ENCODE measurements at regions of chr14 and their contacts with region 1.

Region 1: DNA sequence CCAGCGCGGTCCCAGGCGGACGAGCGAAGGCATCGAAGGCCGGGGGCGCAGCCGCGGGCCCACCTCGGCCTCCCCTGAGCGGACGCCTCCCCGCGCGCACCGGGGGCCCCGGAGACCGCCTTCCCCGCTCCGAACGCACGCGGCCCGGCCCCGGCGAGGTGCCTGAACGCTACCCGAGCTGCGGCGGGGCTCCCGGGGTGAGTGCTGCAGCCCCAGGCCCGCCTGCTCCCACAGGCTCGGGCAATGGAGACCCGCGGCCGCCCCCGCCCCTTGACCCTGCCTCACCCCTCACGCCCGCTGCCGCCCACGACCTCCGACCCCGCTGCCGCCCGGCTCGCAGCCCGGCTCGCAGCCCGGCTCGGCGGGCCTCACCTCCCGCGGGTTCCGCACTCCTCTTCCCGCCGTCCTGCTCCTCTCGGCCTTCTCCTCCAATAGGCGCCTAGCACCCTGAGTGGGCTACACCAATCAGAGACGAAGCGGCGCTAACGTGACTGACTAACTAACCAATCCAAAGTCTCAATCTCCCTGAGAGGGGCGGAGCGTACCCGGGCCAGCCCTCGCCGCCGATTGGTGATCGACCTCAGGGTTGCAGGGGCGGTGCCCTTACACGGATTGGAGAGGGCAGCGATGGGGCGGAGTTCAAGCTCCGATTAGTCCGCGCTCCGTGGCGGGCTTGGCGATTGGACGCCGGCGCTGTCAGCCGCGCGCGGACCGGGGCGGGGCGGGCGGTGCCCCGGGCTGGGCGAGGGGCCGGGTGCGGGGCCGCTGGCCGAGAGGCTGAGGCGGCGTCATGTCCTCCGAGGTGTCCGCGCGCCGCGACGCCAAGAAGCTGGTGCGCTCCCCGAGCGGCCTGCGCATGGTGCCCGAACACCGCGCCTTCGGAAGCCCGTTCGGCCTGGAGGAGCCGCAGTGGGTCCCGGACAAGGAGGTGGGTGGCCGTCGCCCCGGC is at the starts of genes XRCC3 and ZFYVE21:
- DNase-seq: peak; percentile 100
- H3K4me3 ChIP-seq: peak within 1 kb of the TSS; percentile 79
- H3K27ac ChIP-seq: peak within 1 kb of the TSS; percentile 36
- H3K4me1 ChIP-seq: peaks cover 24% of the 10 kb centered on the region
- H3K27me3 ChIP-seq: no peaks in the 10 kb centered on the region
- CTCF ChIP-seq: no peak
- total RNA-seq, gene XRCC3: 64.1 and 65.1 TPM in 2 replicates
- total RNA-seq, gene ZFYVE21: 93.3 and 118 TPM in 2 replicates

Region 2: GRCh38 chr14:101917413-101918017 is 1797.8 kb before region 1 on chr14:
- CTCF ChIA-PET with region 1: no interaction called
- POLR2A ChIA-PET with region 1: interaction called, 33 read pairs
- intact Hi-C with region 1: no loop called
- DNase-seq: no peak
- H3K4me3 ChIP-seq: no peak overlapping the region
- H3K27ac ChIP-seq: no peak overlapping the region
- H3K4me1 ChIP-seq: no peaks in the 10 kb centered on the region
- H3K27me3 ChIP-seq: no peaks in the 10 kb centered on the region
- CTCF ChIP-seq: no peak

Region 3: GRCh38 chr14:103628684-103629502 is 86.4 kb before region 1 on chr14 and contains the start of gene KLC1:
- CTCF ChIA-PET with region 1: no interaction called
- POLR2A ChIA-PET with region 1: no interaction called
- intact Hi-C with region 1: loop called (anchors 2 kb)
- DNase-seq: peak; percentile 57 to 90
- H3K4me3 ChIP-seq: peak within 1 kb of the TSS; percentile 81
- H3K27ac ChIP-seq: peak within 1 kb of the TSS; percentile 92
- H3K4me1 ChIP-seq: peaks cover 50% of the 10 kb centered on the region
- H3K27me3 ChIP-seq: no peaks in the 10 kb centered on the region
- CTCF ChIP-seq: no peak
- total RNA-seq, gene KLC1: 254 and 331 TPM in 2 replicates

Region 4: DNA sequence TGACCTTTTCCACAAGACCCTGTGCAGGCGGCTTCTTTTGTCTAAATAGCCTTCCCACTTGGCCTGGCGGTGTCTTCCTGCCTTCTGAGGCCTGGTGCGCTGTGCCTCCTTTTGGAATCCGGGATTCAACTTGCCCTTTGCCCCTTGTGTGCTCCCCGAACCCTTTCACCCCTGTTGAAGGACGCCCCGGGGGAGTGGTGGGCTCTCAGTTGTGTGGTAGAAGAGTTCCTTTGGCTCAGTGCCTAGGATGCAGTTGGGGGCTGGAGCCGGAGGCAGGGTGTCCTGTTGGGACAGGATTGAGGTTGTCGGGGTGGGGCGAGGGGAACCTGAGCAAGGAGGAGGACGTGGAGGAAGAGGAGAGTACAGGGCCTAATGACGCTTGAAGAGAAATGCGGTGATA is 51.8 kb before region 1 on chr14:
- CTCF ChIA-PET with region 1: interaction called, 5 read pairs
- POLR2A ChIA-PET with region 1: interaction called, 19 read pairs
- intact Hi-C with region 1: no loop called
- DNase-seq: no peak
- H3K4me3 ChIP-seq: no peak overlapping the region
- H3K27ac ChIP-seq: no peak overlapping the region
- H3K4me1 ChIP-seq: no peaks in the 10 kb centered on the region
- H3K27me3 ChIP-seq: no peaks in the 10 kb centered on the region
- CTCF ChIP-seq: no peak

Region 5: DNA sequence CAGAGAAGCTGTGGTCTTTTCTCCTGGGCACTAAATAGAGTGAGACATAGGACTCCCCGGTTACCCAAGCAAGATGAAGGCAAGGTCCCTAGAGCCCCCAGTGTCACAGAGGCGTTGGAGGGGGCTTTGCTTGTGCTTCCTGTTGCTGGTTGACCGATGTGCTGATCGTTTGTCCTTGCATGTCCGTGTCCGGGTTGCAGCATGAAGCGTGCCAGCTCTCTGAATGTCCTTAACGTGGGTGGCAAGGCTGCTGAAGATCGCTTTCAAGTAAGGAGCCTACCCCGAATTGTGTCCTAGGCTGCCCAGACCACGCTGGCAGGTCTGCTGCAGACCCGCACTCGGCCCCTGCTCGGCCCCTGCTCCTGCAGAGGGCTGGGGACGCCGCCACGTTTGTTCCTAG is 23.2 kb before region 1 on chr14:
- CTCF ChIA-PET with region 1: interaction called, 3 read pairs
- POLR2A ChIA-PET with region 1: no interaction called
- intact Hi-C with region 1: loop called (anchors 1 kb)
- DNase-seq: no peak
- H3K4me3 ChIP-seq: no peak overlapping the region
- H3K27ac ChIP-seq: no peak overlapping the region
- H3K4me1 ChIP-seq: peaks cover 15% of the 10 kb centered on the region
- H3K27me3 ChIP-seq: no peaks in the 10 kb centered on the region
- CTCF ChIP-seq: no peak

Region 6: GRCh38 chr14:103705118-103705503 is 10.2 kb before region 1 on chr14:
- CTCF ChIA-PET with region 1: interaction called, 6 read pairs
- POLR2A ChIA-PET with region 1: interaction called, 4 read pairs
- intact Hi-C with region 1: loop called (anchors 1 kb)
- DNase-seq: peak; percentile 99 to 100
- H3K4me3 ChIP-seq: no peak overlapping the region; the same call in 1 of the 2 replicates
- H3K27ac ChIP-seq: peak overlapping the region; percentile 44
- H3K4me1 ChIP-seq: peaks cover 19% of the 10 kb centered on the region
- H3K27me3 ChIP-seq: no peaks in the 10 kb centered on the region
- CTCF ChIP-seq: no peak

Region 7: DNA sequence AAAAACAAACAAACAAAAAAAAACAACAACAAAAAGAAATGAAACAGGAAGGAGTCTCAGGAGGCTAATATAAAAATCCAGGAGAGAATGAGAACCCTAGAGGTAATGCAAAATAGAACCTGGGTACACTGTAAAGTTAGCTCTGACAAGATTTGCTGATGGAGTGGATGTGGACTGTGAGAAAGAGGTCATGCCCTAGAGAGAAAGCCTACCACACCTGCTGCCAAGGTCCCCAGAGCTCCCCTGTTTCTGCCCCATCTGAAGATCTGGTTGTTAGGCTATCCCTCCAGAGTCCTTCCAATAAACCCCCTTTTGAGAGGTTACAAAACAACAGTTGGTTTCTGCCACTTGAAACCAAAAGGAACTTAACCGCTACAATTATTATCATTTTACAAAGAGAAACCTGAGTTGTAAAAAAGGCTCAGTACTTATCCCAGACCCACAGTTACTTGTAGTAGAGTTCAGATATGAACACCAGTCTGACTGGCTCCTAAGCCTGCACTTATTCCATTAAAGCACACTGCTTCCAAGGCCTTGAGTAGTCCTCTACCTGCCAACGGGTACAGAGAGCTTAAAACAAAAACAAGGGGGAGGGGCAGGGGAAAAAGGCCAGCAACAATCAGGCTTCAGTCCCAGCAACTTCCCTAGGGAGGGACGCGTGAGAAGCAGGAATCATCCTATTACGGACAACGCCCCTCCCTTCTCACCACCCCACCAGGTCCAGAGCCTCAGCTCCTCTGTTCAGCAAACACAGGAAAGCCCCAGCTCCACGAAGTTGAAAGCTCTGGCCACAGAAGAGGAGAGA is 104.4 kb after region 1 on chr14:
- CTCF ChIA-PET with region 1: no interaction called
- POLR2A ChIA-PET with region 1: no interaction called
- intact Hi-C with region 1: no loop called
- DNase-seq: no peak
- H3K4me3 ChIP-seq: no peak overlapping the region
- H3K27ac ChIP-seq: no peak overlapping the region
- H3K4me1 ChIP-seq: no peaks in the 10 kb centered on the region
- H3K27me3 ChIP-seq: no peaks in the 10 kb centered on the region
- CTCF ChIP-seq: no peak